ENCODE measurements at regions of chr5 and their contacts with region 1.

Region 1: GRCh38 chr5:73454351-73455036 is 5.9 kb upstream of the FOXD1 start:
- DNase-seq: peak; percentile 81 to 83
- H3K4me3 ChIP-seq: no peak overlapping the region
- H3K4me3 Mint-ChIP-seq: no peak overlapping the region
- H3K27ac Mint-ChIP-seq: no peak overlapping the region
- H3K4me1 ChIP-seq: peaks cover 4% of the 10 kb centered on the region; the same call in 1 of the 2 replicates
- H3K4me1 Mint-ChIP-seq: no peaks in the 10 kb centered on the region
- H3K27me3 ChIP-seq: peaks cover 3% of the 10 kb centered on the region
- H3K27me3 Mint-ChIP-seq: peaks cover 15% of the 10 kb centered on the region
- CTCF ChIP-seq: peak; percentile 84 to 92

Region 2: GRCh38 chr5:72920690-72921502 is 533.6 kb before region 1 on chr5:
- CTCF ChIA-PET with region 1: no interaction called
- POLR2A ChIA-PET with region 1: no interaction called
- intact Hi-C with region 1: loop called (anchors 10 kb)
- DNase-seq: peak in 1 of 2 experiments; percentile 11
- H3K4me3 ChIP-seq: no peak overlapping the region
- H3K4me3 Mint-ChIP-seq: no peak overlapping the region
- H3K27ac Mint-ChIP-seq: no peak overlapping the region
- H3K4me1 ChIP-seq: no peaks in the 10 kb centered on the region
- H3K4me1 Mint-ChIP-seq: no peaks in the 10 kb centered on the region
- H3K27me3 ChIP-seq: no peaks in the 10 kb centered on the region
- H3K27me3 Mint-ChIP-seq: no peaks in the 10 kb centered on the region
- CTCF ChIP-seq: peak; percentile 25 to 28

Region 3: DNA sequence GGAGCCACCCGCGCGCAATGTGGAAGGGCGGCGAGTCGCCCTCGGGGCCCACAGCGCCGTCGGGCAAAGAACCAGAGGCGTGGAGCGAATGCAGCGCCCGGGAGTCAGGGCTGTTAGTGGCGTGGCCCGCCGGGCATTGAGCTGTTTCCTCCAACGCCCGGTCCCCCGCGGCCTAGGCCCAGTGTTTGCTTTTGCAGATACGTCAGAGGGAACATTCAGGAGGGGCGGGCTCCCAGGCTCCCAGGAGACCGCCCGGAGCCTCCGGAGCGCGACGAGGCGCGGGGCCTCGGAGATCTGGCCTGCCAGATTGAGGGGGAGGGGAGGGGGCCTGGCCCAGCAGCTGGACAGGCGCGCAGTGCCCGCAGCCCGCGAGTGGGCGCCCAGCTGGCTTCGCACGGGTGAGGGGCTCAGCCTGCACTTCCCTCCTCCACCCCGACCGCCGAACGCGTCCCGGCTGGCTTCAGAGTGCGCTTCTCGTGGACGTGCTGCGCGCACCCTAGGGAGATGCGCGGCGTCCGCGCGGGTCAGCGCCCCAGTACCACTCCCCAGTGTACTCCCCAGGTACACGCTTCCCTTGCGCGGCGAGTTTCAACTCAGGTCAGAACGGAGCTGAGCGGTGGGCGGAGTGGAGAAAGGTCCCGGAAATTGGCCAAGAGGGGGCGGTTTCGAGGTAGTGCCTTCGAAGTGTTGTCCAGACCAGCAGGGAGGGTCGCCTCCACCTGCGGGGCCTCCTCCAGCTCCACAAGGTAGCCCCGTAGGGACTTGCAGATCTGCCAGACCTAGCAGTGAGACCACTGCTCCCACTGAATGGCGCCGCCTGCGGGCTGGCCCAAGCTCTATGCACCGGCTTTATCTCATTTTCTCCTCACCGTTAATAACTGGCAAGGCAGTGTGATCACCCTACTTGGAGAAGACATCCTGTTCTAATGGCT is 151.1 kb before region 1 on chr5:
- CTCF ChIA-PET with region 1: interaction called, 4 read pairs
- POLR2A ChIA-PET with region 1: no interaction called
- intact Hi-C with region 1: loop called (anchors 5 kb)
- DNase-seq: no peak
- H3K4me3 ChIP-seq: peak overlapping the region; percentile 39
- H3K4me3 Mint-ChIP-seq: peak overlapping the region; percentile 18
- H3K27ac Mint-ChIP-seq: no peak overlapping the region
- H3K4me1 ChIP-seq: no peaks in the 10 kb centered on the region
- H3K4me1 Mint-ChIP-seq: no peaks in the 10 kb centered on the region
- H3K27me3 ChIP-seq: no peaks in the 10 kb centered on the region
- H3K27me3 Mint-ChIP-seq: peaks cover 9% of the 10 kb centered on the region
- CTCF ChIP-seq: peak in 1 of 2 experiments; percentile 9

Region 4: GRCh38 chr5:73496984-73497457 is 42.5 kb after region 1 on chr5:
- CTCF ChIA-PET with region 1: interaction called, 6 read pairs
- POLR2A ChIA-PET with region 1: no interaction called
- intact Hi-C with region 1: loop called (anchors 1 kb)
- DNase-seq: peak in 1 of 2 experiments; percentile 64
- H3K4me3 ChIP-seq: peak overlapping the region; percentile 71
- H3K4me3 Mint-ChIP-seq: peak overlapping the region; percentile 92
- H3K27ac Mint-ChIP-seq: no peak overlapping the region
- H3K4me1 ChIP-seq: peaks cover 31% of the 10 kb centered on the region
- H3K4me1 Mint-ChIP-seq: peaks cover 15% of the 10 kb centered on the region
- H3K27me3 ChIP-seq: no peaks in the 10 kb centered on the region
- H3K27me3 Mint-ChIP-seq: no peaks in the 10 kb centered on the region
- CTCF ChIP-seq: peak; percentile 15 to 43

Region 5: DNA sequence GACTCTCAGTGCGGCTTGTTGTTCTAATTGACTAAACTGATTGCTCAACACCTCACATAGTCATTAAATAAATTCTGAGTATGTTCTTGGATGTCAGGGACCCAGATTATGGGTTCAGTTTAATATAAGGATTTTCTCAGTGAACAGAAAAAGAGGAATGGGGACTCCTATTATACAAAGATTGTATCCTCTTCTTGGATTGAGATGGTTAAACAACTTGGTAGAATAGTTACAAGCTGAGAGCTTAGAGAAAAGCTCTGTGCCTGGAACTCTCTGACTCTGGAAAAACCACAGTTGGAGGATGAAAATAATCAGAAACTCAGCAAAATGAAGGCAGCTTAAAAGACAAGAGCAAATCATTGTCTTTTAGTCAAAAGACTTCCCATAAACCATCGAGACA is 80.5 kb after region 1 on chr5:
- CTCF ChIA-PET with region 1: interaction called, 3 read pairs
- POLR2A ChIA-PET with region 1: no interaction called
- intact Hi-C with region 1: loop called (anchors 5 kb)
- DNase-seq: no peak
- H3K4me3 ChIP-seq: no peak overlapping the region
- H3K4me3 Mint-ChIP-seq: no peak overlapping the region
- H3K27ac Mint-ChIP-seq: no peak overlapping the region
- H3K4me1 ChIP-seq: no peaks in the 10 kb centered on the region
- H3K4me1 Mint-ChIP-seq: no peaks in the 10 kb centered on the region
- H3K27me3 ChIP-seq: no peaks in the 10 kb centered on the region
- H3K27me3 Mint-ChIP-seq: no peaks in the 10 kb centered on the region
- CTCF ChIP-seq: no peak

Region 6: DNA sequence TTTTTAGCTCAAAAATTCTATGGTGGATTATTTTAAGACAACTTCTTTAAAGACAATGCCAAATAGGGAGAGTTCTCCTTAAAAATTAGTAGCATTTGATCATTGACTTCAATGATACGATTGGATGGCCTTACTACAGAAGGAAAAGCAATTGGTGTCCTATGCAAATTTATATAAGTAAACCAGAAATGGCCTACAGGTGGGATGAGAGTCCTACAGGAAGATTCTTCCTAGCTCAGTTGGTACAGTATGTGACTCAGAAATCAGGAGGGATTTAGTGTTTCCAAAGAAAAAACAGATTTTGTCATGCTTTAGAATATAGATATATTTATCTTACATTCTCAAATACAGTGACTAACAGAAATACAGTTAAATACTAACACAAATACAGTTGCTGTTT is 104.5 kb after region 1 on chr5:
- CTCF ChIA-PET with region 1: no interaction called
- POLR2A ChIA-PET with region 1: no interaction called
- intact Hi-C with region 1: no loop called
- DNase-seq: no peak
- H3K4me3 ChIP-seq: no peak overlapping the region
- H3K4me3 Mint-ChIP-seq: no peak overlapping the region
- H3K27ac Mint-ChIP-seq: no peak overlapping the region
- H3K4me1 ChIP-seq: no peaks in the 10 kb centered on the region
- H3K4me1 Mint-ChIP-seq: peaks cover 4% of the 10 kb centered on the region
- H3K27me3 ChIP-seq: no peaks in the 10 kb centered on the region
- H3K27me3 Mint-ChIP-seq: no peaks in the 10 kb centered on the region
- CTCF ChIP-seq: peak in 1 of 2 experiments; percentile 38